ENCODE measurements at regions of chr2 and their contacts with region 1.

Region 1: DNA sequence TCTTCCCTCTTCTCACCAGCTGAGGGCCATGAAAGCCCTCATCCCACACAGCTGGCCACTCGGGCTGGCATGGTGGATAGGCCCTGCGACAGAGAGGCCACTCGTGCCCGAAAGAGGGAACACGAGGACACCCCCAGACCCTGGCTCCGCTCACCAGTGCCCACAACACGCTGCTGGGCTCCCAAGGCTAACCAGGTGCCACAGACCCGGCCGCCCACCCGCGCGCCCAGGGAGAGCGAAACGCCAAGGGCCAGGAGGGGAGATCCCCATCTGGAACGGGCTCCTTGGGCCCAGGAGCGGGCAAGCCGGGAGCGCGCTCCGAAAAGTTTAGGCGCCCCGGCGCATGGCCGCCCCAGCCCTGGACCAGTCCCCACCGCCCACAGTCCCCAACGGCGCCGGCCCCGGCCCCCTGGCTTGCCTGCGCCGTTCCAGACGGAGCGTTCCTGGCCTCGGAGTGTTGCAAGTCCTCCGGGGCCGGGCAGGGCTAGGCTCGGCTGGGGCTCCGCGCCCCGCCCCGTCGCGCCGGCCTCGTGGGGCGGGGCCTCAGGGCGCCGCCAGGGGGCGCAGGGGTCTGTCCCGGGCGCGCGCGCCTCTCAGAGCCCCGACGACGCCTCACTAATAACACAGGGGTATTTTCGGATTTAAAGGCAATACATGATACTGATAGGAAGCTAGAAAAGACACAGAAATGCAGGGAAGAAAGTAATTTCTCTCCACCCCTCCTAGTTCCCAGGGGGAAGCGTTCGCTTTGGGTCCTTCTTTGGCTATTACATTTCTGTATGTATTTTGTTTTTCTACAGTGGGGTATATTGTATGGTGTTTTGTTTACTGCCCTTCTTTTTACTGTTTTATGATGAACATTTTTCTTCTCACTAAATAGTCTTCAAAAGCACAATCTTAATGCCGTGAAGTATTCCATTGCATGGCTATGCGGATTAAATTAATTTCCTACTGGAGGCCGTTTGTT is at the start of gene TMBIM1:
- DNase-seq: peak; percentile 72 to 90 (median 83)
- ATAC-seq: peak; percentile 96
- H3K4me3 ChIP-seq: peak within 1 kb of the TSS; percentile 53
- H3K4me3 Mint-ChIP-seq: peak within 1 kb of the TSS; percentile 82 to 96 (median 92)
- H3K27ac ChIP-seq: peak within 1 kb of the TSS; percentile 93
- H3K27ac Mint-ChIP-seq: peak within 1 kb of the TSS; percentile 88 to 99 (median 98)
- H3K4me1 ChIP-seq: peaks cover 42 to 47% of the 10 kb centered on the region in 2 donors
- H3K4me1 Mint-ChIP-seq: peaks cover 32 to 61% (median 53%) of the 10 kb centered on the region in 7 donors
- H3K27me3 ChIP-seq: no peaks in the 10 kb centered on the region
- H3K27me3 Mint-ChIP-seq: peaks cover 0 to 2% (median 0%) of the 10 kb centered on the region in 5 donors
- total RNA-seq, gene TMBIM1: 51.7 to 112 (median 83.8) TPM

Region 2: GRCh38 chr2:218312267-218312756 is 20.0 kb after region 1 on chr2:
- CTCF ChIA-PET with region 1: interaction called, 3 read pairs
- POLR2A ChIA-PET with region 1: interaction called, 15 read pairs
- intact Hi-C with region 1: no loop called
- DNase-seq: no peak
- ATAC-seq: no peak
- H3K4me3 ChIP-seq: no peak overlapping the region
- H3K4me3 Mint-ChIP-seq: no peak overlapping the region
- H3K27ac ChIP-seq: no peak overlapping the region
- H3K27ac Mint-ChIP-seq: peak overlapping the region in 8 of 9 donors; percentile 36 to 88 (median 67)
- H3K4me1 ChIP-seq: peaks cover 15 to 17% of the 10 kb centered on the region in 2 donors
- H3K4me1 Mint-ChIP-seq: peaks cover 17 to 44% (median 40%) of the 10 kb centered on the region in 7 donors
- H3K27me3 ChIP-seq: no peaks in the 10 kb centered on the region
- H3K27me3 Mint-ChIP-seq: peaks cover 0 to 2% (median 0%) of the 10 kb centered on the region in 5 donors

Region 3: GRCh38 chr2:218367415-218368153 is 75.3 kb after region 1 on chr2:
- CTCF ChIA-PET with region 1: interaction called, 4 read pairs
- POLR2A ChIA-PET with region 1: interaction called, 4 read pairs
- intact Hi-C with region 1: loop called in 1 of 2 experiments (anchors 2 kb)
- DNase-seq: peak; percentile 55 to 79 (median 62)
- ATAC-seq: peak; percentile 89
- H3K4me3 ChIP-seq: peak overlapping the region; percentile 74
- H3K4me3 Mint-ChIP-seq: peak overlapping the region; percentile 75 to 87 (median 82)
- H3K27ac ChIP-seq: peak overlapping the region; percentile 72
- H3K27ac Mint-ChIP-seq: peak overlapping the region; percentile 14 to 94 (median 89)
- H3K4me1 ChIP-seq: peaks cover 0 to 17% of the 10 kb centered on the region in 2 donors
- H3K4me1 Mint-ChIP-seq: peaks cover 11 to 51% (median 31%) of the 10 kb centered on the region in 7 donors
- H3K27me3 ChIP-seq: no peaks in the 10 kb centered on the region
- H3K27me3 Mint-ChIP-seq: peaks cover 0 to 33% (median 0%) of the 10 kb centered on the region in 5 donors

Region 4: DNA sequence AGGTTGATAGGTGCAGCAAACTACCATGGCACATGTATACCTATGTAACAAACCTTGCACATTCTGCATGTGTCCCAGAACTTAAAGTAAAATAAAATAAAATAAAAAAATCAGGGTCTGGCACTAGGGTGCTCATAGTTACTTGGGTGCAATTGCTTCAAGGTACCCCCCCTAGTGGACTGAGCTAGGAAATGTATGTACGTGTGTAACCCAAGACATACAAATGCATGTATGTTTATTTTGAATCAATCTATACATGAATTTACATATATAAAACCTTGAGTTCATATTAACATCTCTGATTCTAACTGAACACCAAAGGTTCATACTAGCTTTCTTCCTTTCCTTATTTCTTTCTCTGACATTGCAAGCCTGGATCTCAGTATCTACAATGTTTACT is 224.3 kb after region 1 on chr2:
- CTCF ChIA-PET with region 1: interaction called, 3 read pairs
- POLR2A ChIA-PET with region 1: no interaction called
- intact Hi-C with region 1: loop called in 1 of 2 experiments (anchors 2 kb)
- DNase-seq: peak in 7 of 9 donors; percentile 9 to 46 (median 31)
- ATAC-seq: peak; percentile 74
- H3K4me3 ChIP-seq: no peak overlapping the region
- H3K4me3 Mint-ChIP-seq: no peak overlapping the region
- H3K27ac ChIP-seq: no peak overlapping the region
- H3K27ac Mint-ChIP-seq: peak overlapping the region in 1 of 9 donors; percentile 78
- H3K4me1 ChIP-seq: no peaks in the 10 kb centered on the region
- H3K4me1 Mint-ChIP-seq: peaks cover 0 to 42% (median 13%) of the 10 kb centered on the region in 7 donors
- H3K27me3 ChIP-seq: no peaks in the 10 kb centered on the region
- H3K27me3 Mint-ChIP-seq: no peaks in the 10 kb centered on the region

Region 5: DNA sequence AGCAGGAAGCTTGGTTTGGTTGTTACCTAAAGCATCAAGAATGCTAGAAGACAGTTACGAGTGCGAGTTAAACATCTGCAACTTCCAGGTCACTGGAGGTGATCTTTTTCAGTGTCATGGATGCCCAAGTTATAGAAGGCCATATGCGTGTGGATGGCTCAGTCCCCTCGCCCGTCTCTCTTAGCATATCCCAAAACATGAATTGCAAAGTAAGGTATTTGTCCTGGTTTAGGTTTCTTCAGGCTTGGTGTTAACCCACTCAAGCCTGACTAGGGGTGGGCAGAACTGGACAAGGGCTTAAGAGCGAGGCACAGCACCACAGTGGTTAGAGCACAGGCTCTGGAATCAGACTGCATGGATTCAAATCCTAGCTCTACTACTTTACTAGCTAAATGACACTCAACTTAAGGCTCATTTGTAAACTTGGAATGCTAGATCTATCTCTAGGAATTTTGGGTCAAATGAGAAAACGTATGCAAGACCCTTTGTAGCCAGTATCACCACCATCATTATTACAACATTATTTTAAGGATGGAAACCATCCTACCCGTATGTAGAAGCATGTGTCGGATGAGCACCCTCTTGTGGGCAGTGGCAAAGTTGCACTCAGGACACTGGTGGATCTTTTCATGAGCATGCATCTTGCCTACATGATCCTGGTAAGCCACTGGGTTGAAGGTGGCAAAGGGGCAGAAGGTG is 355.9 kb after region 1 on chr2:
- CTCF ChIA-PET with region 1: no interaction called
- POLR2A ChIA-PET with region 1: no interaction called
- intact Hi-C with region 1: loop called in 1 of 2 experiments (anchors 1 kb)
- DNase-seq: peak; percentile 15 to 55 (median 46)
- ATAC-seq: peak; percentile 91
- H3K4me3 ChIP-seq: no peak overlapping the region
- H3K4me3 Mint-ChIP-seq: peak overlapping the region in 1 of 10 donors; percentile 7
- H3K27ac ChIP-seq: no peak overlapping the region
- H3K27ac Mint-ChIP-seq: peak overlapping the region in 1 of 9 donors; percentile 35
- H3K4me1 ChIP-seq: peaks cover 0 to 7% of the 10 kb centered on the region in 2 donors
- H3K4me1 Mint-ChIP-seq: peaks cover 0 to 14% (median 12%) of the 10 kb centered on the region in 7 donors
- H3K27me3 ChIP-seq: no peaks in the 10 kb centered on the region
- H3K27me3 Mint-ChIP-seq: no peaks in the 10 kb centered on the region

Region 6: DNA sequence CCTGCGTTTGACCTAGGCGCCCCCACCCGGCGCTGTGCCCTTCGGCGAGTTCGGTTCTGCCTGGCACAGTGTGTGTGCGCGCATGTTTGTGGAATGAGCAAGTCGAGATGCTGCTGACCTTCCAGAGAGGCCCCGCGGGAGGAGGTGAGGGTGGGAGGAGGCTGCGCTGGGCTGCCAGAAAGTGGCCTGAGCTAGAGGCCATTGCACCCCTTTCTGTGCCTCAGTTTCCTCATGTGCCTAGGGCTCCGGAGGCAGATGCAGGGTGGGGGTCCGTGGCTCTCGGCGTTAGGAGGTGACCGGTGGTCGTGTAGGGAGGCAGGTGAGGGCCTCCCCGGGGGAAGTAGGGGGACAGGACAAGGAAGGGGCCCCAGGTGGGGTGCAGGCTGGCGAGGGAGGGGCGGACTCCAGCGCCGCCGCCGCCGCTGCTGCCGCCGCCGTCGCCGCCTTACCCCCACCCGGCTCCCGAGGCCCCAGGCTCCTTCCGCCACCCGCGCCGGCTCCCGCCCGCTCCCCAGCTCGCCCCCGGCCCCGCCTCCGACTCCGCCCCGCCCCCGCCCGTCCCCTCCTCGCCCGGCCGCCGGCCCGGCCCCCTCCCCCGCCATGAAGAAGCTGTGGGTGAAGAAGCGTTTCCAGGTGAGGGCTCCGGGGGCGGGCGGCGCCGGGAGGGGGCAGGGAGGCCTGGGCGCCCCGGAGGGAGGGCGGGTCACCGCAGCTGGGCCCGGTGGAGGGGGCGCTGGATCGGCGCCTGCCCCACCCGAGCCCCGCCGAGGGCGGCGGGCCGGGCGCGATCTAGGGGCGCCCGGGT is 1149.3 kb after region 1 on chr2:
- CTCF ChIA-PET with region 1: no interaction called
- POLR2A ChIA-PET with region 1: no interaction called
- intact Hi-C with region 1: no loop called
- DNase-seq: peak; percentile 23 to 54 (median 49)
- ATAC-seq: peak; percentile 77
- H3K4me3 ChIP-seq: peak overlapping the region; percentile 44
- H3K4me3 Mint-ChIP-seq: peak overlapping the region; percentile 77 to 92 (median 85)
- H3K27ac ChIP-seq: peak overlapping the region; percentile 14
- H3K27ac Mint-ChIP-seq: peak overlapping the region in 5 of 9 donors; percentile 1 to 83 (median 67)
- H3K4me1 ChIP-seq: peaks cover 2 to 9% of the 10 kb centered on the region in 2 donors
- H3K4me1 Mint-ChIP-seq: peaks cover 7 to 15% (median 13%) of the 10 kb centered on the region in 7 donors
- H3K27me3 ChIP-seq: peaks cover 0 to 2% of the 10 kb centered on the region in 2 donors
- H3K27me3 Mint-ChIP-seq: peaks cover 0 to 55% (median 0%) of the 10 kb centered on the region in 5 donors

Measured in naive thymus-derived CD4-positive, alpha-beta T cell (primary cell).